Heart right ventricle (tissue), 16 donors: ENCODE measurements at regions of chr12 and their contacts with region 1.

Region 1: DNA sequence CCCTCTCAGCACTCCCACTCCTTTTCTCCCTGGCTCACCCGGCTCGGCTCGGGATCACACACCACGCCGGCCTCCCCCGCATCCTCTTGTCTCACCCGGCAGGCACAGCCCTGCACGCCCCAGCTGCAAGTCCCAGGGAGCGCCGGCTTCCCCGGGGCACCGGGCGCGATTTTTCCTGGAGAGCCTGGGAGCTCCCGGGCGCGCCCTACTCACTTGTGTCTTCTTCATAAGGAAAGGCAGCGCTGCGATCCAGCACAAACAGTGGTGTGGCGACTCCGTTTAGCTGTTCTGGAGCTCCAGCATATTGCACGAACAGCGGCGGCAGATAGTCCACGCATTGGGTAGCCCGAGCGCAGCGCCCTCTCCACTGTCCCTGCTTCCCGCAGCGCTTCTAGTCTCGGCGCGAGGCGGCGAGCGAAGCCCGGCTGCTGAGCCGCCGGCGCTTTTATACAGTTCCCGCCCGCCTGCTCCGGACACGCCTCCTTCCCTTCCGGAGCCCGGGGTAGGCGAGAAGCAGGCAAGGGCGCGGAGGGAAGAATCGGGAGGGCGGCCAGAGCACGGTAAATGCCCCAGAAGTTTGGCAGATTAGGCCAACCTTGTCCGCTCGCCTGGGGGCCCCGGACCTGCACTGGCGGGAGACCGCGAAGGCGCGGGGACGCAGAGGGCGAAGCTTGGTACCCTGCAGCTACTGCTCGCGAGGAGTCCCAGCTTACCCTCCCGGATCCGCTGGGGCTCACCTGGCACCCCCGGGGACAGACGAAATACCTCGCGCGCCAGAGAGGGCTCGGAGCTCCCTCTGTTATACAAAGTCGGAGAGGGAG is at the start of gene KITLG:
- DNase-seq: peak; percentile 83 to 86
- ATAC-seq: peak; percentile 96 to 98 (median 97)
- H3K4me3 ChIP-seq: peak within 1 kb of the TSS; percentile 67 to 86 (median 73)
- H3K27ac ChIP-seq: peak within 1 kb of the TSS; percentile 66 to 91 (median 83)
- H3K4me1 ChIP-seq: peaks cover 0 to 27% (median 14%) of the 10 kb centered on the region in 9 donors
- H3K27me3 ChIP-seq: peaks cover 0 to 42% (median 0%) of the 10 kb centered on the region in 7 donors
- CTCF ChIP-seq: peak in 6 of 9 donors; percentile 30 to 65 (median 50)
- total RNA-seq, gene KITLG: 4.2 to 20.5 (median 9.3) TPM

Region 2: GRCh38 chr12:88325076-88325815 is 255.0 kb before region 1 on chr12:
- intact Hi-C with region 1: loop called in 1 of 10 experiments (anchors 10 kb)
- DNase-seq: no peak
- ATAC-seq: peak in 6 of 8 donors; percentile 67 to 72 (median 70)
- H3K4me3 ChIP-seq: no peak overlapping the region
- H3K27ac ChIP-seq: peak overlapping the region in 8 of 10 donors; percentile 27 to 80 (median 60)
- H3K4me1 ChIP-seq: peaks cover 0 to 15% (median 0%) of the 10 kb centered on the region in 9 donors
- H3K27me3 ChIP-seq: no peaks in the 10 kb centered on the region
- CTCF ChIP-seq: no peak

Region 3: GRCh38 chr12:88493636-88494035 is 86.6 kb before region 1 on chr12:
- intact Hi-C with region 1: loop called in 1 of 10 experiments (anchors 5 kb)
- DNase-seq: no peak
- ATAC-seq: no peak
- H3K4me3 ChIP-seq: no peak overlapping the region
- H3K27ac ChIP-seq: no peak overlapping the region
- H3K4me1 ChIP-seq: peaks cover 0 to 8% (median 0%) of the 10 kb centered on the region in 9 donors
- H3K27me3 ChIP-seq: no peaks in the 10 kb centered on the region
- CTCF ChIP-seq: no peak

Region 4: GRCh38 chr12:88638966-88639760 is 58.9 kb after region 1 on chr12:
- intact Hi-C with region 1: loop called in 1 of 10 experiments (anchors 10 kb)
- DNase-seq: no peak
- ATAC-seq: peak in 7 of 8 donors; percentile 43 to 87 (median 72)
- H3K4me3 ChIP-seq: peak overlapping the region in 3 of 10 donors; percentile 1 to 10 (median 6)
- H3K27ac ChIP-seq: peak overlapping the region; percentile 11 to 84 (median 58)
- H3K4me1 ChIP-seq: peaks cover 0 to 22% (median 16%) of the 10 kb centered on the region in 9 donors
- H3K27me3 ChIP-seq: no peaks in the 10 kb centered on the region
- CTCF ChIP-seq: no peak

Region 5: DNA sequence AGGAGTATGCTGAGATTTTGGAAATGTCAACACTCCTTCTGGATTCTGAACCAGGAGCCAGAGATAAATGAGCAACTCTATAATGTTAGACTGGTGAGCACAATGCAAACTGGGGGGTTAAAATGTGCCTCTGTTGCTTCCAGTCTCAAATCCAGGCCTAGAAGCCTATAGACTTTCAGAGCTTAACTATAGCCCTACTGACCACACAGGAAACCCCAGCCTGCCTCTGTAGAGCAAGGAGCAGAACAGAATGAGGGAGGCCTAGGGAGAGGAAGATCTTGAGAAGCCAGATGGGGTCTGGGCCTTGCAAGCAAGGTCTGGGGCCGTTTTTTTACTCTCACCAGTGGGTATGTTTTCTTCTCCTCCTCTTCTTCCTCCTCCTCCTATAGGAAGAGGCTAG is 225.4 kb after region 1 on chr12:
- intact Hi-C with region 1: no loop called
- DNase-seq: no peak
- ATAC-seq: no peak
- H3K4me3 ChIP-seq: no peak overlapping the region
- H3K27ac ChIP-seq: no peak overlapping the region
- H3K4me1 ChIP-seq: no peaks in the 10 kb centered on the region
- H3K27me3 ChIP-seq: no peaks in the 10 kb centered on the region
- CTCF ChIP-seq: no peak

Region 6: DNA sequence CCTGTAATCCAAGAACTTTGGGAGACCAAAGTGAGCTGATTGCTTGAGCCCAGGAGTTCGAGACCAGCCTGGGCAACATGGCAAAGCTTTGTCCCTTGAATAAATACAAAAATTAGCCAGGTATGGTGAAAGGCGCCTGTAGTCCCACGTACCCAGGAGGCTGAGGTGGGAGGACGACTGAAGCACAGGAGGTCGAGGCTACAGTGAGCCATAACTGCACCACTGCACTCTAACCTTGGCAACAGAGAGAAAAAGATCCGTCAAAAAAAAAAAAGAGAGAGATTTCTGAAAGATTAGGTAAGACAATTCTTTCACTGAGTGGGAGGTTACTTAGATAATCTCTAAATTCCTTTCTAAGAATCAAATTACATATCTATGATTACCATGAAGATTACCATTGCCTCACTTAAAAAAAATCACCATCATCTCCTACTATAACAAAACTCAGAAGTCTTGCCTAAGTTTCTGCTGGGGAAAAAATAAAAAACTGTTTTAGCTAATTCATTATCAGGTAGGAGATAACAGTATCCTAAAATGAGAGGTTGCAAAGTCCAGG is 405.3 kb after region 1 on chr12:
- intact Hi-C with region 1: loop called in 5 of 10 experiments (anchors 5 to 10 kb)
- DNase-seq: no peak
- ATAC-seq: no peak
- H3K4me3 ChIP-seq: no peak overlapping the region
- H3K27ac ChIP-seq: peak overlapping the region in 2 of 10 donors; percentile 43 to 48
- H3K4me1 ChIP-seq: peaks cover 0 to 20% (median 8%) of the 10 kb centered on the region in 9 donors
- H3K27me3 ChIP-seq: peaks cover 0 to 3% (median 0%) of the 10 kb centered on the region in 7 donors
- CTCF ChIP-seq: no peak